CD4-positive, alpha-beta T cell (primary cell): ENCODE measurements at regions of chr9 and their contacts with region 1.

Region 1: GRCh38 chr9:37903647-37904444 is at the start of gene SLC25A51:
- DNase-seq: peak; percentile 93 to 98 (median 95)
- ATAC-seq: peak; percentile 87
- H3K4me3 ChIP-seq: peak within 1 kb of the TSS; percentile 61
- H3K4me3 Mint-ChIP-seq: peak within 1 kb of the TSS; percentile 100
- H3K27ac ChIP-seq: peak within 1 kb of the TSS; percentile 57 to 70
- H3K27ac Mint-ChIP-seq: peak within 1 kb of the TSS; percentile 97
- H3K4me1 ChIP-seq: peaks cover 23% of the 10 kb centered on the region
- H3K4me1 Mint-ChIP-seq: peaks cover 33% of the 10 kb centered on the region
- H3K27me3 ChIP-seq: no peaks in the 10 kb centered on the region
- H3K27me3 Mint-ChIP-seq: no peaks in the 10 kb centered on the region
- CTCF ChIP-seq: peak; percentile 88
- total RNA-seq, gene SLC25A51: 13.3 to 13.8 TPM

Region 2: DNA sequence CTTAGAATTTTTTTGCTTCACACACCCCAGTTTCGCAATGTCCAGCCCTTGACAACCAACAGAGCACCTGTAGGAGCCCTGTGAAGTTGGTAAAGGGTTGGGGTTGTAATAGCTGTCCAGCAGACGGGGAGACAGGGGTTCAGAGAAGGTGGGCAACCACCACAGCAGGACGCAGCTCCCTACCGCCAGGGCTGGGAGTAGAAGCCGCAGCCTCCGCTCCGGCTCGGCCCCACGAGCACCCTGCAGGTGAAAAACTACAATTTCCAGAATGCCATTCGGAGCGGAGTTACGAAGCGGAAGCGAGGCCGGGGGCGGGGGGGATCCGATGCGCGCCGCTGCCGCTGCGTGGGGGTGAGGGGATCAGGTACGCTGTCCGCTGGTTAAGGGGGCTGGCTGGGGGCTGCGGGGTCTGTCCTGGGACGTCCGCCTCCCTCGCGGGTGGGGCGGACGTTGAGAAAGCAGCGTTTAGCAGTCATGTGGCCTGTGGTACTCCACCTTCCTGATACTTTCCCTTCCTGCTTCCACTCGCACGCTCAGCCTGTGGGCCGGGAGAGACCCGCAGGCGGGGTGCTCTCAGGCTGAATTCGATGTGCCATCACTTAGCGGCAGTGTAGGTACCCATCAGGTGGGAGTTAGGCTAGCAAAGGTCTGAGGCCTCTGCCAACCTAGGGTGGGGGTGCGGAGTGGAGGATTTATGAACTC is 150.2 kb before region 1 on chr9 and contains the start of gene TRMT10B:
- CTCF ChIA-PET with region 1: no interaction called
- POLR2A ChIA-PET with region 1: interaction called, 3 read pairs
- intact Hi-C with region 1: loop called in 1 of 2 experiments (anchors 2 kb)
- DNase-seq: peak; percentile 50 to 85 (median 62)
- ATAC-seq: peak; percentile 93
- H3K4me3 ChIP-seq: peak within 1 kb of the TSS; percentile 97
- H3K4me3 Mint-ChIP-seq: peak within 1 kb of the TSS; percentile 93
- H3K27ac ChIP-seq: peak within 1 kb of the TSS; percentile 69 to 78
- H3K27ac Mint-ChIP-seq: peak within 1 kb of the TSS; percentile 88
- H3K4me1 ChIP-seq: peaks cover 18% of the 10 kb centered on the region
- H3K4me1 Mint-ChIP-seq: peaks cover 33% of the 10 kb centered on the region
- H3K27me3 ChIP-seq: no peaks in the 10 kb centered on the region
- H3K27me3 Mint-ChIP-seq: no peaks in the 10 kb centered on the region
- CTCF ChIP-seq: no peak
- total RNA-seq, gene TRMT10B: 6.6 to 8.3 TPM

Region 3: DNA sequence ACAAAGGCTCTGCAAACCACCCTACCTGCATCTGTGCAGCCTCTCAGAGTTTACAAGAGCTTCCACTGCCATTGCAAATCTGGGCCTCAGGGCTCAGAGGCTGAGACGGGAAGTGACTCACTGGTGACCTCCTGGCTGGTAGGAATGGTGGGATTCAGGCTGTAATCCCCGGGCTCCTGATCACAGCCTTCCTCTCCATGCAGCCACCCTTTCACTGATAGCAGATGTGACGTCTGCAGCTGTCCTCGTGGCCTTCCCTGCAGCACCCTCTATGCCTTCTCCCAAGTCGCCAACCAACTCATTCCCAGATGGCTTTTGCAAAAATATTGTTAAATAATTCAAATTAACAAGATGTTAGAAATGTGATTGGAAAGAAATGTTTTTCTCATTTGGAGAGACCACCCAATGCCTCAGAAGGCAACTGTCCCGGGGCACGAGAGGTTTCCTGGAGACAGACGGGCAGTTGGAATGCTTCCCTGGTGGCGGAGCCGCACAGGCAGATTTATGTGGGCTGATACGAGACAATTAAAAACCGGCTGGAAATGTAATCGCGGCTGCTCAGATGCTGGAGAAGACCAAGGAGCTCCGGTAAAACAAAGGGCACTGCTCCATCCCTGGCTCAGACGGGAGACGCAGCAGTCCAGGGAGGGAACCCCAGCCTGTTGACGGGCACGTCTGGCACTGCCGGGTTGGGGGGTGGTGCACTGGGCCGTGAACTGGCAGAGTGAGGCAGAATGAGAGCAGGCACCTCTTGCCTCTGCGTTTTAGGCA is 34.5 kb after region 1 on chr9:
- CTCF ChIA-PET with region 1: no interaction called
- POLR2A ChIA-PET with region 1: no interaction called
- intact Hi-C with region 1: no loop called
- DNase-seq: no peak
- ATAC-seq: no peak
- H3K4me3 ChIP-seq: no peak overlapping the region
- H3K4me3 Mint-ChIP-seq: no peak overlapping the region
- H3K27ac ChIP-seq: no peak overlapping the region
- H3K27ac Mint-ChIP-seq: no peak overlapping the region
- H3K4me1 ChIP-seq: no peaks in the 10 kb centered on the region
- H3K4me1 Mint-ChIP-seq: no peaks in the 10 kb centered on the region
- H3K27me3 ChIP-seq: no peaks in the 10 kb centered on the region
- H3K27me3 Mint-ChIP-seq: no peaks in the 10 kb centered on the region
- CTCF ChIP-seq: no peak

Region 4: DNA sequence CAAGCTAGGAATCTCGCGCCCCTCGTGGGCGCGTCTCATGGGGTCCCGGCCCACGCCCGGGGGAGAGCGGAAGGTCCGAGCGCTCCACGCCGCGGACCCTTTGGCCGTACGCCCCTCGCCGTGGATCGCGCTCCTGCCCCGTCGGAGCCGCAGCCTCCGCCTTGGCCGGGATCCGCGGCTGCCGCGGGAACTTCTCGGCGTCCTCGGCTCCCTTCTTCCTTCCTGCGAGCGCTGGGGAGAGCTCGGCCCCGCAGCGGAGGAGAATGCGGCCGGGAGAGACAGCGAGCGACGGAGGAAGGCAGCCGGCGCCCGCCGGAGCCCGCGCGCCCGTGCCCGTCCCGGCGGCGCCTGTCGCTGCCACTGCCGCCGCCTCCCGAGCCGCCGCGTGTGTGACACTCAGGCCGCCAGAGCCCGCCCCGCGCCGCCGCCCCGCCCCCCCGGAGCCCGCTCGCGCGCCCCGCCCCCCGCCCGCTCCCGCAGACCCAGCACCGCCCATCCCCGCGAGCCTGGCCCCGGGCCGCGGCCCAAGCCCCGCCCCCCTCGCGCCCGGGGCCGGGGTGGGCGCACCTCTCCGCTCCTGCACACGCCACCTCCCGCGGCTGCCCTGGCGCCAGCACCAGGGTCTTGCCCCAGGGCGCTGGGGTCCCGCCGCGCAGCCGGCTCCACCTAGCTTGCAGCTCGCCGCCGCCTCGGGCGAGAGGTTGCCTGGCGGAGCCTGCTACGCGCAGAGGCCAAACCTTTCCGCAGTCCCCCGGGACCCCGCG is 165.2 kb after region 1 on chr9 and contains the start of gene SHB:
- CTCF ChIA-PET with region 1: interaction called, 5 read pairs
- POLR2A ChIA-PET with region 1: interaction called, 11 read pairs
- intact Hi-C with region 1: loop called (anchors 1 to 2 kb)
- DNase-seq: peak; percentile 60 to 94 (median 81)
- ATAC-seq: peak; percentile 77
- H3K4me3 ChIP-seq: peak within 1 kb of the TSS; percentile 67
- H3K4me3 Mint-ChIP-seq: peak within 1 kb of the TSS; percentile 87
- H3K27ac ChIP-seq: no peak within 1 kb of the TSS
- H3K27ac Mint-ChIP-seq: peak within 1 kb of the TSS; percentile 29
- H3K4me1 ChIP-seq: peaks cover 26% of the 10 kb centered on the region
- H3K4me1 Mint-ChIP-seq: peaks cover 30% of the 10 kb centered on the region
- H3K27me3 ChIP-seq: no peaks in the 10 kb centered on the region
- H3K27me3 Mint-ChIP-seq: no peaks in the 10 kb centered on the region
- CTCF ChIP-seq: peak; percentile 34
- total RNA-seq, gene SHB: 1.1 to 1.2 TPM